Astrocyte of the cerebellum (primary cell): ENCODE measurements at regions of chr16 and their contacts with region 1.

Region 1: GRCh38 chr16:55091213-55091870 is 160.7 kb downstream of the IRX5 start:
- DNase-seq: no peak
- H3K4me3 ChIP-seq: no peak overlapping the region
- CTCF ChIP-seq: no peak

Region 2: GRCh38 chr16:55048745-55049144 is 42.6 kb before region 1 on chr16:
- in situ Hi-C with region 1: loop called (anchors 10 kb)
- DNase-seq: no peak
- H3K4me3 ChIP-seq: no peak overlapping the region
- CTCF ChIP-seq: peak; percentile 7